ENCODE measurements at regions of chr5 and their contacts with region 1.

Region 1: GRCh38 chr5:54254482-54255198 is 55.7 kb downstream of the ARL15 start:
- DNase-seq: peak in 1 of 2 experiments; percentile 6
- ATAC-seq: no peak
- H3K4me3 ChIP-seq: no peak overlapping the region
- H3K27ac ChIP-seq: no peak overlapping the region
- H3K4me1 ChIP-seq: no peaks in the 10 kb centered on the region
- CTCF ChIP-seq: 0 out of 3 replicates have a peak, but pooled peaks have one; percentile 7
- EP300 ChIP-seq: no peak
- POLR2A ChIP-seq: no peak
- RAD21 ChIP-seq: peak in 1 of 2 experiments; percentile 22; a peak in 2 of 5 replicates

Region 2: DNA sequence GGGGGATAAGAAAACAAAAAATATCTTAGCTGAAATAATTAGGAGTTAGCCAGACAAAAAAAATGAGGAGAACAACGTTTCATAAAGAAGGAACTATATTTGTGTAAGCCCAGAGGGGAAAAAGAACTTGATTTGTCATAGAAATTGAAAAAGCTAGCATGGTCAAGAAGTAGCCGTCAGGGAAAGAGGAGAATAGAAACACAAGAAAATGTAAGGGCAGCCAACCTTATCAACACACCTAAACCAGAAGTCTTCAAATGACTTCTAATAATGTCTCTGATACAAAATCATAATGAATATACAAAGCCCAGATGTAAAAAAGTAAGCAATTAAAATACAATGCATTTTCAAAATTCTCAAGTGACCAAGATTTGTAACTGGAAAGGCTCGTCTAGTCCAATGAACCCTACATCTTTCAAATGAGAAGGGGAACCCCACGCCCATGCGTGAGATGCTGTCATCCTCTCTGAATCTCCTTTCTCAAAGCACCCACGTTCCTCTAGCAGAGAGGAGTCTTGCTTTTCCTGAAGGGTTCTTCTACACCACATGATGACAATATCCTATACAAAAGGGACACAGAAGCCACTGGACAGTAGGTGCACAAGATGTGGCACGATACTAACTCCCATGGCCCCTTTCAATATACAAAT is 47.9 kb before region 1 on chr5:
- CTCF ChIA-PET with region 1: no interaction called
- POLR2A ChIA-PET with region 1: no interaction called
- DNase-seq: no peak
- ATAC-seq: no peak
- H3K4me3 ChIP-seq: no peak overlapping the region
- H3K27ac ChIP-seq: no peak overlapping the region
- H3K4me1 ChIP-seq: no peaks in the 10 kb centered on the region
- CTCF ChIP-seq: no peak
- EP300 ChIP-seq: no peak
- POLR2A ChIP-seq: no peak
- RAD21 ChIP-seq: no peak

Region 3: DNA sequence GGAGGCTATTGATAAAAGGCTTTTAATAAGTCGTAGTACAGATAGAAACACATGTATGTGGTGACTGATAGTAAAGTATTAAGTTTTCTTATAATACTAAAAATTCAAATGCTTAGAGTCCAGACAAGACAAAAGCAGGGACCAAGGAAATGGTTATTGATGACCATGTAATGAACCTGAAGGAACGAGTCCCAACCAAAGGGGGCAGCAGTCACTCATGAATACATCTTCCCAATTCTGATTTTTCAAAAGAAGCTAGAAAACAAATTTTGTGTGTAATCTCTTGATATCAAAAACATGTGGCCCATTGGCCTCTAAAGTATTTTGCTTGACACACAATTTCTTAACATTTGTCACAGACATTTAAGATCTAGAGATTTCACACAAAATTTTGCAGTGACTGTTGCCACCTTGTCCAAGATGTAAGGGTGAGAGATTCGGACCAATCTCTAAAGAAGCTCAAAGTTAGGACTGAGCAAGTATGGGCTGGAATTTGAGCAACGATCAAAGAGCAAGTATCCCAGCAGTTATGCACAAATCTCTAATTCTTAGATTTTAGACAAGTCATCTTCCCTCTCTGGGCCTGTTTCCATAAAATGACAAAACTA is 11.1 kb before region 1 on chr5:
- CTCF ChIA-PET with region 1: interaction called, 30 read pairs
- POLR2A ChIA-PET with region 1: no interaction called
- DNase-seq: peak; percentile 12 to 52
- ATAC-seq: peak; percentile 50 to 65; a peak in 3 of 6 replicates
- H3K4me3 ChIP-seq: no peak overlapping the region
- H3K27ac ChIP-seq: no peak overlapping the region
- H3K4me1 ChIP-seq: 0 out of 3 replicates have a peak, but pooled peaks cover 3% of the 10 kb centered on the region
- CTCF ChIP-seq: peak; percentile 84
- EP300 ChIP-seq: no peak
- POLR2A ChIP-seq: no peak
- RAD21 ChIP-seq: peak; percentile 80

Region 4: DNA sequence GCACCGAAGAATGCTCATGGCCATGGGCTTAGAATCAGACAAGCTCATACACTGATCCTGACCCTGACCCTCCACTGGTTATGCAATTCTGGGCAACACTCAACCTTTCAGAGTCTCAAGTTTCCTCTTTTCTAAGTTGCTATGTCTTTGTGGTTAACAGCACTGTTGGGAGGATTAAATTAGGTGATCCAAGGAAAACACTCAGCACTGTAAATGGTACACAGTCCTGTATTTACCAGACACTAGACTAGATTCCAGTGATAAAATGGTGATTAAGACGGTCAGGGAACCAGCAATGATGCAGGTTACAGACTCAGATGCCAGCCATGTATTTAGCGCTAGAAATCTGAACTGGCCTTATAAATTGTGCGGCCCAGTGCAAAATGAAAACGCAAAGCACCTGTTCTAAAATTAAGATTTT is 47.6 kb after region 1 on chr5:
- CTCF ChIA-PET with region 1: no interaction called
- POLR2A ChIA-PET with region 1: no interaction called
- DNase-seq: no peak
- ATAC-seq: no peak
- H3K4me3 ChIP-seq: no peak overlapping the region
- H3K27ac ChIP-seq: no peak overlapping the region
- H3K4me1 ChIP-seq: no peaks in the 10 kb centered on the region
- CTCF ChIP-seq: no peak
- EP300 ChIP-seq: no peak
- POLR2A ChIP-seq: no peak
- RAD21 ChIP-seq: no peak